Activated CD4-positive, alpha-beta T cell treated with anti-CD3 and anti-CD28 coated beads for 36 hours (primary cell): ENCODE measurements at regions of chr3 and their contacts with region 1.

Region 1: DNA sequence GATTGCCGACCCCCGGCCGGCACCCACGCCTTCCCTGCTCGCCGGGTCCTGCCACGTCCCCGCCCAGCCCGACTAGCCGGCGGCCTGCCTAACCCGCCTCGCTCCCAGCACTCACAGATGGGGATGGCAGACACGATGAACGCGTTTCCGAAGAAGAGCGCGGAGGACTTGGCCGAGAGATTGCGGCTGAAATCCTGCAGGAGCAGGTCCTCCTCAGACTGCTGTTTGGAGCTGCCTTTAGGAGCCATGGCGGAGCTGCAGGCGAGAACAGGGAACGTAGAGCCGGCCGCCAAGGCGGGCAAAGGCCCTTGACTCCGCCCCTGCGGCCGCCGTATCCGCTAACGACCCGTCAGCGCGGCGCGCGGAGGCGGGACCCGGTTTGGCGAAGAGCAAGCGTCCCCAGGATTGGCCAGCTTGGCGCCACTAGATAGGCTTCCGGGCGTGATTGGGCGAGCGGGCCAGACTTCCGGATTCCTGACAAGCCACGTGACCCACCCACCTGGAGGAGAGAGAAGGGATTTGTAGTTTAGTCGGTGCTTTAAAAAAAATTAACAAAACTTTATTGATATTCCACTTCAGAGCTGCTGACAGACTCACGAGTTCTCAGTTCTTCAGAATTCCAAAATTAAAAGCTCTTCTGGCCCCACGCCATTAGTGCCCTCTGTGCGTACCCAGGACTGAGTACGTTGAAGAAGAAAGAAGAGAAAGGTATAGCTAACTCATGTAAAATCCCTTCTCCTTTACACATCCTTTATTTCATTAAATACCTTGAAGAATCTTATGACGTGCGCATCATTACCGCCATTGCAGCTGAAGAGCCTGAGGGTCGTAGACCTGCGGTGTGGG is at the start of gene SSR3:
- DNase-seq: peak; percentile 100
- ATAC-seq: peak; percentile 99
- H3K4me3 Mint-ChIP-seq: peak within 1 kb of the TSS; percentile 92
- H3K27ac Mint-ChIP-seq: peak within 1 kb of the TSS; percentile 93
- H3K4me1 Mint-ChIP-seq: peaks cover 47% of the 10 kb centered on the region
- H3K27me3 Mint-ChIP-seq: no peaks in the 10 kb centered on the region
- total RNA-seq, gene SSR3: 144 to 156 TPM

Region 2: DNA sequence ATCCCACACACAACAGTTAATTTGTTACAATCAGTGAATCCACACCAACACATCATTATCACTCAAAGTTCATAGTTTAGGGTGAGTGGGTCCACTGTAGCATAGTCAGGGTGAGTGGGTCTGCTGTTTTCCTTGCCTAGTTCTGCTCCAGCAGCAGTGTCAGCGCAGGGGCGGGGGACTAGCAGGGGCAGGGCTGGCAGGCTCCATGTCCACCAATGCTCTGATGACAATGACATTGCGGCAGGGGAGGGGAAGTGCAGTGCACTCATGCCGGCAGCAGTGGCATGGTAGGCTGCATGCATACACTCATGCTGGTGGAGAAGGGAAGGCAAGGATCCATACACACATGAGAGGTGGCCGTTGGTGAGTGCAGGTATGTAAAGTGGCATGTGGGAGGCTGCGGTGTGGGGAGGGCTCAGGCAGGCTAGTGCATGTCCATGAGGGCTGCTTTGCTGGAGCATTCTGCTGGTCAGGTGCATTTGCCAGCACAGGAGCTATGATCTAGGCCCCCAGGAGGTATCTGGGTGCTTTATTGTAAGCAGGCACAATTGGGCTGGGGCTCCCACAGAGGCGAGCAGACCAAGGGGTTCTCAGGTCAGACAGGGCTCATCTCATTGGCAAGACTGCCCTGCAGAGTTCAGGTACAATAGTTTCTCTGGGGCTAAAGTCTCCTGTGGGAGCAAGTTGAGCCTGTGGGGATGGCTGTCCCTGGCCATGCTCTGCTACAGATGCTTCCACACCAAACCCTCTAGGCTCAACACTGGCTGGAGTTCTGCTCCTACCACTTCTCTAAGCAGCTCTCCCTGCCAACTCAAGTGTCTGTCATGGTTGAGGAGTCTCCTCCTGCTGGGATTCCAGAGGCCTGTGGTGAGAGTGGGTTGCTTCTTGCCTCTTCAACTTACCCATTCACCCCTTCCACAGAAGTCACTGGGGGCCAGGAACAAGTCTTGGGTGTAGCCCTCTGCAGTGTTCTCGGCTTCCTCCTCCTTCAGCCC is 353.4 kb before region 1 on chr3:
- CTCF ChIA-PET with region 1: no interaction called
- POLR2A ChIA-PET with region 1: no interaction called
- intact Hi-C with region 1: no loop called
- DNase-seq: no peak
- ATAC-seq: no peak
- H3K4me3 Mint-ChIP-seq: no peak overlapping the region
- H3K27ac Mint-ChIP-seq: no peak overlapping the region
- H3K4me1 Mint-ChIP-seq: no peaks in the 10 kb centered on the region
- H3K27me3 Mint-ChIP-seq: peaks cover 24% of the 10 kb centered on the region

Region 3: GRCh38 chr3:156483961-156484787 is 70.9 kb before region 1 on chr3:
- CTCF ChIA-PET with region 1: no interaction called
- POLR2A ChIA-PET with region 1: no interaction called
- intact Hi-C with region 1: loop called in 1 of 2 experiments (anchors 1 kb)
- DNase-seq: peak; percentile 63
- ATAC-seq: peak; percentile 76
- H3K4me3 Mint-ChIP-seq: peak overlapping the region; percentile 69
- H3K27ac Mint-ChIP-seq: peak overlapping the region; percentile 92
- H3K4me1 Mint-ChIP-seq: peaks cover 35% of the 10 kb centered on the region
- H3K27me3 Mint-ChIP-seq: no peaks in the 10 kb centered on the region

Region 4: GRCh38 chr3:156525808-156526207 is 29.3 kb before region 1 on chr3:
- CTCF ChIA-PET with region 1: interaction called, 4 read pairs
- POLR2A ChIA-PET with region 1: no interaction called
- intact Hi-C with region 1: loop called (anchors 1 to 2 kb)
- DNase-seq: no peak
- ATAC-seq: no peak
- H3K4me3 Mint-ChIP-seq: no peak overlapping the region
- H3K27ac Mint-ChIP-seq: no peak overlapping the region
- H3K4me1 Mint-ChIP-seq: peaks cover 14% of the 10 kb centered on the region
- H3K27me3 Mint-ChIP-seq: peaks cover 14% of the 10 kb centered on the region

Region 5: DNA sequence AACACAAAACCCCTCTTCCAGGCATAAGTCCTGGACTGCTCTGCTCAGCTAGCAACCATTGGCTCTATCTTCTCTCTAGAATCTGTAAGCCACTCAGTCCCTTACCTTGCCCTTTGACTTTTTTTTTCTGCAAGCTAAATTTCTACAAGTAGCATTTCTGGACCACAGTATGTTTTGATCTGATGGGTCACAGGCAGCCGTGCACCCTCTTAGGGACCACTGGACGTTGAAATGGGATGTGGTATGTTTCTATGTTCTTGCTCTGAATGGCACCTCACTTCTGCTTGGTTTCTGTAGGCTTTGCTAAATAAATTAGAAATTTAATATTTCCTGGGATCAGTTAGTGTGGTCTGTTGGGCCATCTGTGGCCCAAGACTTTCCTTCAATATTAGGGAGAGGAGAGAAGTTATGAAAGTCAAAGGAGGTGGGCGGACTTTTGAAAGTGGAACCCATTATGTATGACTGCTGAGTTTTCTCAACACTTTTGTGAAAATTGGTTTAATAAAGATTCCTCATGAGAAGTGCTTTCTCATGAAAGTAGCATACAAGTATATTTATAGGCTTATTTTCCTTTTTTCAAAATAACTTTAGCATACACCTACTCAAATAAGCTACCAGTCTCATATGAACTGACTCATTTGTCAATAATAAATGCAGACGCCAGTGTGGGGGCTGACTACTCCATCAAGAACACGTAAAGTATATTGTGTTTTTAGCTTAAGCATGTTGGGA is 100.9 kb after region 1 on chr3:
- CTCF ChIA-PET with region 1: no interaction called
- POLR2A ChIA-PET with region 1: no interaction called
- intact Hi-C with region 1: no loop called
- DNase-seq: no peak
- ATAC-seq: no peak
- H3K4me3 Mint-ChIP-seq: no peak overlapping the region
- H3K27ac Mint-ChIP-seq: no peak overlapping the region
- H3K4me1 Mint-ChIP-seq: no peaks in the 10 kb centered on the region
- H3K27me3 Mint-ChIP-seq: no peaks in the 10 kb centered on the region

Region 6: DNA sequence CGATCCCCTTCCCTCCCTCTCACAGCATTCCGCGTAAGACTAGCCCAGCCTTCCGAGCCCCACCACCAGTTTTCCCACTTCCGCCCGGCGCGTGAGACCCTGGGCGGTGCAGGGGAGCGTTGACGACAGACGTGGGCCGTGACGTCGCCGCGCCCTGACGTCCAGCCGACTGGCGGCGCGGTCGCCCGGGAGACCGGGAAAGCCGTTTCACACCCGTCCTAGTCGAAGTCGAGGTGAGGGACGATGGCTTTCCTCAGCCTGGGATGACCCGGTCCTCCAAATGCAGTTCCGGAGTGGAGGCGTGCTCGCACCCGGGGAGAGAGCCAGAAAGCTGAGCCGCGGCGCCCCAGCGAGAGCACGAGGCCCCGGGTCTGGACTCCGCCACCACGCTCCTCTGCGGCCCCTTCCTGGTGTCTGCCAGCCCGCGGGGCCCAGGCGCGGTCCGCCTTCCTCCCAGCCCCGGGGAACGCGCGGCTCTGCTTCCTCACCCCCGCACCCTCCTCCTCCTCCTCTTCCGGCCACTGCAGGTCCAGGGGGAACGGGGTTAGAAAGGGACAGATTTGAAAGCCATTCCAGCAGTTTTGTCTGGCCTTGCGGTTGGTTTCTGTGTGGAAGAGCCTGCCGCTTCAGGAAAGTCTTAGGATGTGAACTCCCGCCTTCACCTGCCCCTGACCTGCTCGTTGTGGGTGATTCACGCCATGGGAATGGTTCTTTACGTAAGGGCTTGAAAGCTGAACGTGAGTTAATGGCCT is 271.3 kb after region 1 on chr3 and contains the start of gene LEKR1:
- CTCF ChIA-PET with region 1: no interaction called
- POLR2A ChIA-PET with region 1: no interaction called
- intact Hi-C with region 1: loop called in 1 of 2 experiments (anchors 1 kb)
- DNase-seq: peak; percentile 76
- ATAC-seq: peak; percentile 77
- H3K4me3 Mint-ChIP-seq: peak within 1 kb of the TSS; percentile 82
- H3K27ac Mint-ChIP-seq: peak within 1 kb of the TSS; percentile 95
- H3K4me1 Mint-ChIP-seq: peaks cover 17% of the 10 kb centered on the region
- H3K27me3 Mint-ChIP-seq: no peaks in the 10 kb centered on the region
- total RNA-seq, gene LEKR1: 0.37 to 0.53 TPM

Region 7: DNA sequence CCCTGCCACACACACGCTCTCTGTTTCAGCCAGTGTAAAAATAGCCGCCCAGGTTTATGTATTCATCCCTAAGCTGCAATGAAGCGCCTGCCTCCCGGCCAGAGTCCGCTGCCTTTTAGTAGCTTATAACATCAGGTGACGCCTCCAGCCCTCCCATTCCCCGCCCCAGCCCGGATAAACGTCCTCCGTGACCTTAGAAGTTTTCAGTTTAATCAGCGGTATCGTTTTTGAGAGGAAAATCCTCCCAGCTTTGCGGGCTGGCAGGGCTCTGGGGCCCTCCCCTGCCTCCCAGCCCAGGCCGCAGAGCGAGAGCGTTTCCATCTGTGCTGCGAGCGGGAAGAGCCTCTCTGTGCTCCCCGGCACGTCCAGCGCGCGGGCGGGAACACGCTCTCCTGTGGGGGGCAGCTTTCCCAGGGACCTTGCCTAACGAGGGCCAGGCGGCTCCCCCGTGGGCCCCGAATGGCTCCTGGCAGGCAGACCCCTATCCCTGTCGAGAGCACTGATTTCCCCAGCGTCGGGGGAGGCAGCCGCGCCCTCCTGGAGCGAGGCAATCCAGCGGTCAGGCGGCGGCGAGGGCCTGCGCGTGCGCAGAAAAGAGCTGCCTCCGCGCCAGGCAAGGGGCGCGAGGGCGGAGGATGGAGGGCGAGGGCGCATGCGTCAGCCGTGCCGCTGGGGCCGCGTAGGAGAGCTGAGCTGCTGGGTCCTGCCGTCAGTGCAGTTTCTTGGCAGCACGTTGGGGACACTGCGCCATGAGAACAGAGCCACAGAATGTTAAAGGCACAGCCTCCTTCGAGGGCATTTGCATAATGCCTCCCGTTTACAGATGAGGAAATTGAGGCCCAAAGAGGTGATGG is 533.8 kb after region 1 on chr3:
- CTCF ChIA-PET with region 1: interaction called, 4 read pairs
- POLR2A ChIA-PET with region 1: interaction called, 7 read pairs
- intact Hi-C with region 1: loop called (anchors 1 kb)
- DNase-seq: peak; percentile 97
- ATAC-seq: peak; percentile 79
- H3K4me3 Mint-ChIP-seq: peak overlapping the region; percentile 72
- H3K27ac Mint-ChIP-seq: peak overlapping the region; percentile 97
- H3K4me1 Mint-ChIP-seq: peaks cover 71% of the 10 kb centered on the region
- H3K27me3 Mint-ChIP-seq: peaks cover 1% of the 10 kb centered on the region

Region 8: GRCh38 chr3:157136647-157137387 is 581.8 kb after region 1 on chr3:
- CTCF ChIA-PET with region 1: interaction called, 10 read pairs
- POLR2A ChIA-PET with region 1: no interaction called
- intact Hi-C with region 1: loop called in 1 of 2 experiments (anchors 5 kb)
- DNase-seq: no peak
- ATAC-seq: no peak
- H3K4me3 Mint-ChIP-seq: no peak overlapping the region
- H3K27ac Mint-ChIP-seq: peak overlapping the region; percentile 39
- H3K4me1 Mint-ChIP-seq: peaks cover 33% of the 10 kb centered on the region
- H3K27me3 Mint-ChIP-seq: no peaks in the 10 kb centered on the region

Region 9: GRCh38 chr3:157282261-157283191 is 727.5 kb after region 1 on chr3:
- CTCF ChIA-PET with region 1: no interaction called
- POLR2A ChIA-PET with region 1: no interaction called
- intact Hi-C with region 1: no loop called
- DNase-seq: no peak
- ATAC-seq: peak; percentile 69
- H3K4me3 Mint-ChIP-seq: no peak overlapping the region
- H3K27ac Mint-ChIP-seq: no peak overlapping the region
- H3K4me1 Mint-ChIP-seq: peaks cover 6% of the 10 kb centered on the region
- H3K27me3 Mint-ChIP-seq: no peaks in the 10 kb centered on the region